GM13977 (cell line): ENCODE measurements at regions of chr3 and their contacts with region 1.

Region 1: GRCh38 chr3:151439652-151440129 is 21.2 kb downstream of the IGSF10 start:
- DNase-seq: peak; percentile 45
- CTCF ChIP-seq: peak; percentile 61

Region 2: GRCh38 chr3:151838583-151839312 is 399.1 kb after region 1 on chr3:
- in situ Hi-C with region 1: loop called (anchors 25 kb)
- DNase-seq: peak; percentile 42
- CTCF ChIP-seq: peak; percentile 78

Region 3: DNA sequence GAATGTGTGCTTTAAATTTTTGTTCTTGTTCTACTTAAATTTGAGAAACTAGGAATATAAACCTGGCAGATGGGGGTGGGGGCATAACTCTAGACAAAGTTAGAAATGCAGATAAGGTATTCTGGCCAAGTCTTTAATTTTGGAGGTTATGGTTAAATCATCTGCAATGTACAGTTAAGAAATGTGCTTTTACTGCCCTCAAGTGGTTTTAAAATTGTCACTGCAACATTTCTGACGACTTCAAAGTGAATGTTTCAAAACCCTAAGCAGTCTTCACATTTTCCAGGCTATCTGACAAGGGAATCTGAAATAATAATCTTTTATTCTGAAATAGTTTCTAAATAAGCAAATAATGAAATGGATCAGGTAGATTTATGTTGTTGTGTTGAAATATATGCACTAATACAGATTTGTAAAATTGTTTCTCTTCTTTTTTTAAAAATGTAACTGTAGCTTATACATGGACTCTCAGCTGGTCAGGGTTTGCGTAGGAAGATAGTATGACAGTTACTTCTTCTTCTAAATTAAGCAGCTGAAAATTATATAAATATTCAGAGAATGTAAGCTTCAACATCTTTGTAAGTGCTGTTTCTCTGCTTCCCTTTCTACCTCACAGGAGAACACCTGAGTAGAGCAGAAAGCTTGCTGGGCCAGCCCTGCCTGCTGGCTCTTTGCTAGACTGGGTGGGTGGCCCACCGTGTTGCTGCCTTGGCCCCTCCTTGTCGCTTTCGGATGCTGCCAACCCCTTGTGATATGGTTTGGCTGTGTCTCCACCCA is 478.8 kb after region 1 on chr3:
- in situ Hi-C with region 1: loop called (anchors 10 kb)
- DNase-seq: peak; percentile 60
- CTCF ChIP-seq: peak; percentile 63